IMR-90 (cell line): ENCODE measurements at regions of chr4 and their contacts with region 1.

Region 1: DNA sequence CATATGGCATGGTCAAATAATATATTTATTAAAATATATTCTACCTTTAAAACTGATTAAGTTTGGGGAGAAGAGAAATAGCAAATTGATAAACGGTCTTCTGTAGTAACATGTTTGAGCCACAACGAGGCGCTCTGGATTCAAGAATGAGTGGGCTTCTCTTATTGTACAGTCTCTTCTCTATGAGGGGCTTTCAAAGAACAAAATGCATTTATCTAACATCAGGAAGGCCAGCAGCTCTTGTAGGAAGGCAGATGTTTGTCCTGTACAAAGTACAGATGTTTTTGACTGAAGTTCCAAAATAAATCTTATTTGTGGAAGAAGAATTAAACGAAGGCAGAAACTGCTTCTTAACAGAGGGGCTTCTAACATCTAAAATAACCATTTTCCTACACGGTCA is 153.6 kb downstream of the RASL11B start:
- DNase-seq: peak; percentile 81
- ATAC-seq: peak; percentile 44; the same call in 1 of the 2 replicates
- H3K4me3 ChIP-seq: no peak overlapping the region
- H3K27ac ChIP-seq: no peak overlapping the region
- H3K4me1 ChIP-seq: peaks cover 28% of the 10 kb centered on the region
- H3K27me3 ChIP-seq: no peaks in the 10 kb centered on the region
- CTCF ChIP-seq: peak; percentile 81
- POLR2A ChIP-seq: no peak
- RAD21 ChIP-seq: peak; percentile 93

Region 2: DNA sequence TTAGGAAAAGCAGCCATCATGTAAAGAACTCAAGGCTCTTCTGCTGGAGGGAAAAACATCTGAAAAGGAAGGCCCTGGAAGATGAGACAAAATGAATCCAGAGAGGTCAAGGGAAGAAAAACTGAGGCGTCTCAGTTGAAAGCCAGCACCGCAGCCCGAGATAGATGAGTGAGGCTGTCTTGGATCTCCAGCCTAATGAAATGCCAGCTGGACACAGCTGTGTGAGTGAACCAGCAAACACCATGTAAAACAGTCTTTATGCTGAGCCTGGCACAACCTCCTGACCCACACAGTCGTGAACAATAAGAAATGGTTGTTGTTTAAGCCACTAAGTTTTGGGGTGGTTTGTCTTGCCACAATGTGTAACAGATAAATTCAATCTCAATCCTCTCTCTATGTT is 202.1 kb before region 1 on chr4:
- CTCF ChIA-PET with region 1: no interaction called
- POLR2A ChIA-PET with region 1: no interaction called
- dilution Hi-C with region 1: no loop called
- in situ Hi-C with region 1: no loop called
- intact Hi-C with region 1: no loop called
- DNase-seq: no peak
- ATAC-seq: no peak
- H3K4me3 ChIP-seq: no peak overlapping the region
- H3K27ac ChIP-seq: peak overlapping the region; percentile 27; the same call in 1 of the 2 replicates
- H3K4me1 ChIP-seq: peaks cover 1% of the 10 kb centered on the region; the same call in 1 of the 2 replicates
- H3K27me3 ChIP-seq: no peaks in the 10 kb centered on the region; the same call in 1 of the 2 replicates
- CTCF ChIP-seq: no peak
- POLR2A ChIP-seq: no peak
- RAD21 ChIP-seq: no peak

Region 3: GRCh38 chr4:52939739-52940138 is 75.9 kb before region 1 on chr4:
- CTCF ChIA-PET with region 1: no interaction called
- POLR2A ChIA-PET with region 1: no interaction called
- dilution Hi-C with region 1: no loop called
- in situ Hi-C with region 1: no loop called
- intact Hi-C with region 1: no loop called
- DNase-seq: no peak
- ATAC-seq: no peak
- H3K4me3 ChIP-seq: no peak overlapping the region
- H3K27ac ChIP-seq: no peak overlapping the region
- H3K4me1 ChIP-seq: no peaks in the 10 kb centered on the region
- H3K27me3 ChIP-seq: no peaks in the 10 kb centered on the region
- CTCF ChIP-seq: no peak
- POLR2A ChIP-seq: no peak
- RAD21 ChIP-seq: no peak

Region 4: DNA sequence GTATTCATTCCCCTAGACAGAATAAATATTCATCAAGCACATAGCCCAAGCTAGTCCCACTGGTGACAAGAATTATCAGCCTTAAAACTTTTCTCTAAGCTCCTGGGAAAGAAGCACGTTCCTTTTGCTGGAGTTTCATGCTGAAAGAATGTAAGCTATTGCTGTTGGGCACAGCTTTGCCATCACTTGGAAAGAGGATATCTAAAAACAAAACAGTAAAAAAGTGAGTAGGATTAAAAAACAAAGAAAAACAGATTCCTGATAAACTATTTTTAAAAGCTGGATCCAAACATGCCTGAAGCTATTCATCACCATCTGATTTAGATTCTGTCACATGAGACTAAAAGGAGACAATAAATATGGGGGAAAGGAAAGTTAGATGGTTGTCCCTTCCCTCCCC is 173.3 kb after region 1 on chr4:
- CTCF ChIA-PET with region 1: no interaction called
- POLR2A ChIA-PET with region 1: no interaction called
- dilution Hi-C with region 1: no loop called
- in situ Hi-C with region 1: loop called (anchors 10 kb)
- intact Hi-C with region 1: loop called (anchors 2 kb)
- DNase-seq: peak; percentile 73
- ATAC-seq: peak; percentile 79
- H3K4me3 ChIP-seq: no peak overlapping the region
- H3K27ac ChIP-seq: peak overlapping the region; percentile 33
- H3K4me1 ChIP-seq: peaks cover 12% of the 10 kb centered on the region; the same call in 1 of the 2 replicates
- H3K27me3 ChIP-seq: no peaks in the 10 kb centered on the region
- CTCF ChIP-seq: no peak
- POLR2A ChIP-seq: no peak
- RAD21 ChIP-seq: no peak

Region 5: DNA sequence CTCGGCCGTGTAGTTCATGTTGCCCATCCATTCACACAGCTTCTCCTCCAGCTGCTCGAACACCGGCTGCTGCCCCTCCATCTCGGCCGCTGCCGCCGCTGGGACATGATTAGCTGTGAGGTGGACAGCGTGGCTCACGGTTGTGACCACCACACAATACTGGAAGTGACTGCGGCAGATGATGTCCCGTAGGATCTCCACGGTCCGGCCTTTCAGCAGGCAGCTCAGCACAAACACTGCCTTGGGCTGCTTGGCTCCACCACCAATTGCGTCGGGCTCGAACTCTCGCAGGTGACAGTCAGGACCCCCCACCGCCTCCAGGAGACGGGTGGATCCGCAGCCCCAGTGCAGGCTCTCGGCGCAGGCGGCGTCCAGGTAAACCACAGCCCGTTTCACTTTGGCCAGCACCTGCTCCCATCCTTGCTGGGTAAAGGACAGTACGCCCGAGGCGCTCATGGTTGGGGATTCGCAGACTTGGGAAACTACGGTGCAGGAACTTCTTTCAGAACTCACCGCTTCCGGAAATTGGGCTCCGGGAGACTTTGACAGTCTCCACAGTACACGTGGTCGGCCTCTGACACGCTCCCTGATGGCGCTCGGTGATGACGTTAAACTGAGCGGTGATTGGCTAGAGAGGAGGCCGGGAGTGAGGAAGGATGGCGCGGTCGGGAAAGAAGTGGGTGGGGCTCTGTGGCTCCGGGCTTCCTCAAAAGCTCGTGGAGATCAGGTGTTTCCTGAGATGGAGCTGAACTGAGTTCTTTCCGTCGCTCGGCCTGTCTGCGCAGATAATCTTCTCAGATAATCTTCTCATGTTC is 350.0 kb after region 1 on chr4 and contains the start of gene SCFD2:
- CTCF ChIA-PET with region 1: no interaction called
- POLR2A ChIA-PET with region 1: no interaction called
- dilution Hi-C with region 1: no loop called
- in situ Hi-C with region 1: loop called (anchors 10 kb)
- intact Hi-C with region 1: loop called (anchors 5 kb)
- DNase-seq: peak; percentile 97
- ATAC-seq: peak; percentile 97
- H3K4me3 ChIP-seq: peak within 1 kb of the TSS; percentile 79
- H3K27ac ChIP-seq: peak within 1 kb of the TSS; percentile 57
- H3K4me1 ChIP-seq: 0 out of 2 replicates have a peak, but pooled peaks cover 3% of the 10 kb centered on the region
- H3K27me3 ChIP-seq: no peaks in the 10 kb centered on the region
- CTCF ChIP-seq: no peak
- POLR2A ChIP-seq: peak; percentile 36; the same call in 1 of the 2 replicates
- RAD21 ChIP-seq: no peak
- total RNA-seq, gene SCFD2: 51.9 and 62.4 TPM in 2 replicates

Region 6: GRCh38 chr4:53377319-53378170 is 361.9 kb after region 1 on chr4 and contains the start of gene FIP1L1:
- CTCF ChIA-PET with region 1: no interaction called
- POLR2A ChIA-PET with region 1: no interaction called
- dilution Hi-C with region 1: no loop called
- in situ Hi-C with region 1: loop called (anchors 10 kb)
- intact Hi-C with region 1: no loop called
- DNase-seq: peak; percentile 87
- ATAC-seq: peak; percentile 96
- H3K4me3 ChIP-seq: peak within 1 kb of the TSS; percentile 93
- H3K27ac ChIP-seq: peak within 1 kb of the TSS; percentile 95
- H3K4me1 ChIP-seq: no peaks in the 10 kb centered on the region; the same call in 1 of the 2 replicates
- H3K27me3 ChIP-seq: no peaks in the 10 kb centered on the region
- CTCF ChIP-seq: no peak
- POLR2A ChIP-seq: peak; percentile 74
- RAD21 ChIP-seq: no peak
- total RNA-seq, gene FIP1L1: 37.5 and 48.9 TPM in 2 replicates

Region 7: DNA sequence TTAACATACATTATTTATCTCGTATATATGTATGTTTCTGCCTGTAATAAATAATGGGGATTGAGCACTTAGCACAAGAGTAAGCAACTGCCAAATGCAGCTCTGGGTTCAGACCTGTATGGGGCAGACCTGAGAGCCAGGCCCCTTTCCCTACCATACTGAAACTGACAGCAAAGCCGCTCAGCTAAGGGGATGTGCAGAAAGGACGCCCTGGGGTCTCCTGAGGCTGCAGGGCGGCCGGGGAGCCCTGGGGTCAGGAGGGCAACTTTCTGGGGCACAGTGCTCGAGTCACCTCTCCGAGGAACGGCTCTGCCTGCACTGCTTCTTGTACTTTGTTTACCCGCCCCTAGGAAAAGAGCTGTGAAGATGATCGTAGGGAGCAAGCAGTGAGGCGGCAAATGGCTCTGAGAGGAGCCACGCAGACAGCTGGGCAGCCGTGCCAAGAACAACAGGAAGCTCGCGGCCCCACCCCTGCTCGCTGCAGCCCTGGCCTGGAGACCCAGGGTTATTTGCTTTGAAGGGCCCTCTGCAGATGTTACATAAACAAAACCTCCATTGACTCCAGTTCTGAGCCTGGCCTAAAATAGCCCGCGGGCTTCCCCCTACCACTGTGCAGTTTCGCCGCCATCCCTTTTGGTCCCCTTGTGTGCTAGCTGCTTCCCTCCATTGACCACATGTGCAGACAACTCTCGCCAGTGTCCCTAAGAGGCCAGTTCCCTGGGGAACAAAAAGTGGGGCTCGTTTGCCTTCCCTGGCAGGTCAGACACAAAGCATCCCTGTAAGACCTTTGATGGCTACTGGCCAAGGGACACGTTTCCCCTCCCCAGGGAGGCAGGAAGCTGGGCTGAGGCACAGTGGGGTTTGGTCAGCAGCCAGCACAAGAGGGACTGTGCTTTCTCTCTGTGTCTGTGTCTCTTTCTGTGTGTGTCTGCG is 686.9 kb after region 1 on chr4:
- CTCF ChIA-PET with region 1: no interaction called
- POLR2A ChIA-PET with region 1: no interaction called
- dilution Hi-C with region 1: no loop called
- in situ Hi-C with region 1: no loop called
- intact Hi-C with region 1: loop called (anchors 5 kb)
- DNase-seq: peak; percentile 77
- ATAC-seq: peak; percentile 83
- H3K4me3 ChIP-seq: no peak overlapping the region
- H3K27ac ChIP-seq: peak overlapping the region; percentile 86
- H3K4me1 ChIP-seq: peaks cover 22% of the 10 kb centered on the region
- H3K27me3 ChIP-seq: no peaks in the 10 kb centered on the region
- CTCF ChIP-seq: 0 out of 2 replicates have a peak, but pooled peaks have one; percentile 10
- POLR2A ChIP-seq: no peak
- RAD21 ChIP-seq: peak; percentile 4; the same call in 1 of the 2 replicates

Region 8: GRCh38 chr4:53786632-53787031 is 771.0 kb after region 1 on chr4:
- CTCF ChIA-PET with region 1: no interaction called
- POLR2A ChIA-PET with region 1: interaction called, 3 read pairs
- dilution Hi-C with region 1: no loop called
- in situ Hi-C with region 1: no loop called
- intact Hi-C with region 1: loop called (anchors 5 kb)
- DNase-seq: peak; percentile 93
- ATAC-seq: peak; percentile 77
- H3K4me3 ChIP-seq: no peak overlapping the region
- H3K27ac ChIP-seq: peak overlapping the region; percentile 93
- H3K4me1 ChIP-seq: peaks cover 39% of the 10 kb centered on the region
- H3K27me3 ChIP-seq: no peaks in the 10 kb centered on the region
- CTCF ChIP-seq: no peak
- POLR2A ChIP-seq: no peak
- RAD21 ChIP-seq: no peak

Region 9: GRCh38 chr4:54064295-54065111 is 1048.8 kb after region 1 on chr4 and contains the start of gene CHIC2:
- CTCF ChIA-PET with region 1: no interaction called
- POLR2A ChIA-PET with region 1: no interaction called
- dilution Hi-C with region 1: no loop called
- in situ Hi-C with region 1: loop called (anchors 25 kb)
- intact Hi-C with region 1: no loop called
- DNase-seq: peak; percentile 92
- ATAC-seq: peak; percentile 88
- H3K4me3 ChIP-seq: peak within 1 kb of the TSS; percentile 81
- H3K27ac ChIP-seq: peak within 1 kb of the TSS; percentile 97
- H3K4me1 ChIP-seq: peaks cover 13% of the 10 kb centered on the region; the same call in 1 of the 2 replicates
- H3K27me3 ChIP-seq: no peaks in the 10 kb centered on the region
- CTCF ChIP-seq: no peak
- POLR2A ChIP-seq: peak; percentile 96
- RAD21 ChIP-seq: no peak
- total RNA-seq, gene CHIC2: 26.3 and 65.0 TPM in 2 replicates